ENCODE measurements at regions of chr7 and their contacts with region 1.

Region 1: GRCh38 chr7:148962823-148963582 is 65.3 kb downstream of the PDIA4 start:
- DNase-seq: peak; percentile 86
- H3K4me3 Mint-ChIP-seq: peak overlapping the region; percentile 91
- H3K27ac Mint-ChIP-seq: peak overlapping the region; percentile 95
- H3K4me1 Mint-ChIP-seq: peaks cover 25% of the 10 kb centered on the region
- H3K27me3 Mint-ChIP-seq: no peaks in the 10 kb centered on the region

Region 2: GRCh38 chr7:148503875-148504487 is 459.0 kb before region 1 on chr7:
- CTCF ChIA-PET with region 1: interaction called, 17 read pairs
- intact Hi-C with region 1: loop called (anchors 1 kb)
- DNase-seq: no peak
- H3K4me3 Mint-ChIP-seq: no peak overlapping the region
- H3K27ac Mint-ChIP-seq: no peak overlapping the region
- H3K4me1 Mint-ChIP-seq: peaks cover 32% of the 10 kb centered on the region
- H3K27me3 Mint-ChIP-seq: peaks cover 21% of the 10 kb centered on the region

Region 3: DNA sequence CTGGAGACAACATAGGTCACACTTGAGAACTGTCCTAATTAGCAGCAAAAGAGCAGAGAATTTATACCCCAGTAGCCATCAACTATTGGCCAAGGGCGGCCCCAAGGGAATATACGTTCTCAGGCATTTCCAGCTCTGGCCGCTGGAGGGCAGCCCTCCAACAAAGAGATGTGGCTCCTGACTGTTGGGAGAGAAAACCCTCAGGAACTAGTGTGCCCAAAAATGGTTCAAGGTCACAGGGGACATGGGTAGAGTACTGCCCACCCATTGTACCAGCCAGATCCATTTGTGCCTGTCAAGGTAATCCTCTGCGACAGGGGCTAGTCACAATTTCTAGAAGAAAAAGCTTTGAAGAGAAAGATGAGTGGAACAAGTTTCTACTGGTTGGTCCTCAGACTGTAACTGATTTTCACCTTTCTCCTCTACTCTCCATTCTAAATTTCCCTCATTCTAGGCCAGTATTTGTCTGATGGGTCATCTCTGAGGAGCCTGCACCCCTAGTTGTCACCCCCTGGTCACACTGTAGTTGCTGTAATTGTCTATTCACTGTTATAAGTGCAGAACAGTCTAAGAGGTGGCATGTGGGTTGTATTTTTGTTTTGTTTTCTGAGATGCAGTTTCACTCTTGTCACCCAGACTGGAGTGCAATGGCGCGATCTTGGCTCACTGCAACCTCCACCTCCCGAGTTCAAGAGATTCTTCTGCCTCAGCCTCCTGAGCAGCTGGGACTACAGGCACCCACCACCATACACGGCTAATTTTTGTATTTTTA is 387.2 kb before region 1 on chr7:
- CTCF ChIA-PET with region 1: interaction called, 27 read pairs
- intact Hi-C with region 1: loop called (anchors 1 kb)
- DNase-seq: peak; percentile 84
- H3K4me3 Mint-ChIP-seq: no peak overlapping the region
- H3K27ac Mint-ChIP-seq: no peak overlapping the region
- H3K4me1 Mint-ChIP-seq: peaks cover 11% of the 10 kb centered on the region
- H3K27me3 Mint-ChIP-seq: no peaks in the 10 kb centered on the region

Region 4: DNA sequence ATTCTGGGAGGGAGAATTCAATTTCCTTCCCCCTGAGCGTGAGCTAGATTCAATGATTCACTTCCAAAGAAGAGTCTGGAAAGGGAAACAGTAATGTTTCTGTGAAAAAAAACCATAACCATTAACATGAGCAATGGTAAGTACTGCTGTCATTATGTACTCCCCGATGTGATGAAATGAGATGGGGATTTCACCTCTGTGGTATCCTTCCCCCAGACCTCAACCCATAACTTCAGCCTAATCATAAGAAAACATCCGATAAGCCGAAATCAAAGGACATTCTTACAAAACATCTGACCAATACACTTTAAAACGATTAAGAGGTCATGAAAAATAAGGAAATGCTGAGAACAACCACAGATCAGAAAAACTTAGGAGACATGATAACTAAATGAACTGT is 106.1 kb before region 1 on chr7:
- CTCF ChIA-PET with region 1: interaction called, 14 read pairs
- intact Hi-C with region 1: loop called (anchors 1 kb)
- DNase-seq: peak; percentile 14
- H3K4me3 Mint-ChIP-seq: no peak overlapping the region
- H3K27ac Mint-ChIP-seq: peak overlapping the region; percentile 32
- H3K4me1 Mint-ChIP-seq: peaks cover 38% of the 10 kb centered on the region
- H3K27me3 Mint-ChIP-seq: no peaks in the 10 kb centered on the region

Region 5: DNA sequence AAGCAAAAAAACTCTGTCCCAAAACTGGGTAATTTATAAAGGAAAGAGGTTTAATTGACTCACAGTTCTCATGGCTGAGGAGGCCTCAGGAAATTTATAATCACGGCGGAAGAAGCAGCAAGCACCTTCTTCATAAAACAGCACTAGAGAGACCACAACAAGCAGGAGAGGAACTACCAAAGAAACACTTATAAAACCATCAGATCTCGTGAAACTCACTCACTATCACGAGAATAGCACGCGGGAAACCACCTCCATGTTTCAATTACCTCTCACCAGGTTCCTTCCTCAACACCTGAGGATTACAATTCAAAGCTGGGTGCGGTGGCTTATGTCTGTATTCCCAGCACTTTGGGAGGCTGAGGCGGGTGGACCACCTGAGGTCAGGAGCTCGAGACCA is 16.8 kb after region 1 on chr7:
- CTCF ChIA-PET with region 1: interaction called, 6 read pairs
- intact Hi-C with region 1: loop called (anchors 1 kb)
- DNase-seq: peak; percentile 64
- H3K4me3 Mint-ChIP-seq: no peak overlapping the region
- H3K27ac Mint-ChIP-seq: peak overlapping the region; percentile 55
- H3K4me1 Mint-ChIP-seq: peaks cover 33% of the 10 kb centered on the region
- H3K27me3 Mint-ChIP-seq: peaks cover 7% of the 10 kb centered on the region

Measured in activated naive CD4-positive, alpha-beta T cell treated with anti-CD3 and anti-CD28 coated beads for 36 hours (primary cell).